ENCODE measurements at regions of chr4 and their contacts with region 1.

Region 1: GRCh38 chr4:80072744-80073472 is at the start of gene ANTXR2:
- DNase-seq: peak; percentile 83
- H3K4me3 Mint-ChIP-seq: peak within 1 kb of the TSS; percentile 87
- H3K27ac Mint-ChIP-seq: peak within 1 kb of the TSS; percentile 92
- H3K4me1 Mint-ChIP-seq: peaks cover 73% of the 10 kb centered on the region
- H3K27me3 Mint-ChIP-seq: no peaks in the 10 kb centered on the region
- total RNA-seq, gene ANTXR2: 113 to 114 TPM

Region 2: GRCh38 chr4:80017125-80017854 is 55.6 kb before region 1 on chr4:
- CTCF ChIA-PET with region 1: interaction called, 3 read pairs
- POLR2A ChIA-PET with region 1: interaction called, 14 read pairs
- DNase-seq: no peak
- H3K4me3 Mint-ChIP-seq: no peak overlapping the region
- H3K27ac Mint-ChIP-seq: no peak overlapping the region
- H3K4me1 Mint-ChIP-seq: peaks cover 26% of the 10 kb centered on the region
- H3K27me3 Mint-ChIP-seq: no peaks in the 10 kb centered on the region

Region 3: GRCh38 chr4:80058740-80059139 is 14.2 kb before region 1 on chr4:
- CTCF ChIA-PET with region 1: interaction called, 4 read pairs
- POLR2A ChIA-PET with region 1: interaction called, 47 read pairs
- DNase-seq: peak; percentile 50
- H3K4me3 Mint-ChIP-seq: peak overlapping the region; percentile 63
- H3K27ac Mint-ChIP-seq: peak overlapping the region; percentile 90
- H3K4me1 Mint-ChIP-seq: peaks cover 70% of the 10 kb centered on the region
- H3K27me3 Mint-ChIP-seq: no peaks in the 10 kb centered on the region

Region 4: GRCh38 chr4:80138551-80139538 is 65.9 kb after region 1 on chr4:
- CTCF ChIA-PET with region 1: no interaction called
- POLR2A ChIA-PET with region 1: interaction called, 26 read pairs
- DNase-seq: peak; percentile 79
- H3K4me3 Mint-ChIP-seq: peak overlapping the region; percentile 18
- H3K27ac Mint-ChIP-seq: peak overlapping the region; percentile 88
- H3K4me1 Mint-ChIP-seq: peaks cover 63% of the 10 kb centered on the region
- H3K27me3 Mint-ChIP-seq: no peaks in the 10 kb centered on the region